Tibial artery (tissue), 4 donors: ENCODE measurements at regions of chr19 and their contacts with region 1.

Region 1: DNA sequence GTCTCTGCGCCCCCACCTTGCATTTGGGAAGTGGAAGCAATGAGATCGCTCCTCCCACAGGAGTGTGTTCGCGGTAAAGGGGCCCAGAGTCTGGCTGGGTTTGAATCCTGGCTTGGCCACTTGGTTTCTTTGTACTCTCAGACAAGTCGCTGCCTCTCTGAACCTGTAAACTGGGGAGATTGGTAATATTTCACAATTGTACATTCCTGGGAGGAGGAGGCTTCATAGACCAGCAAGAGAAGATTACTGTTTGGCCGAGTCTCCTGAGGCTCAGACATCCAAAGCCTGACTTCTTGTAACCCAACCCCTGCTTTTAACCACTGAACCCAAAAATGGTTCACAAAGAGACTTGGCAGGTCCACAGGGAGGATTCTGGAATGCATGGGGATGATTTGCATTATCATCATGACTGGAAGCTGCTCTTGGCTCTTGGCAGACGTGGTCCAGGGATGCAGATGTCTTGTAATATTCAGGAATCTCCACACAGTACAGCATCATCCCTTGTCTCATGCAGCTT is 13.6 kb upstream of the STRN4 start:
- DNase-seq: peak in 1 of 2 donors; percentile 54
- H3K4me3 ChIP-seq: no peak overlapping the region
- H3K27ac ChIP-seq: peak overlapping the region in 1 of 2 donors; percentile 53
- H3K4me1 ChIP-seq: peaks cover 0 to 49% (median 23%) of the 10 kb centered on the region in 4 donors
- H3K27me3 ChIP-seq: no peaks in the 10 kb centered on the region
- CTCF ChIP-seq: no peak

Region 2: GRCh38 chr19:46788262-46788967 is 28.5 kb after region 1 on chr19 and contains the start of gene SLC1A5:
- intact Hi-C with region 1: no loop called
- DNase-seq: peak; percentile 97 to 99
- H3K4me3 ChIP-seq: peak within 1 kb of the TSS; percentile 92 to 95
- H3K27ac ChIP-seq: peak within 1 kb of the TSS; percentile 88 to 97
- H3K4me1 ChIP-seq: peaks cover 0 to 38% (median 28%) of the 10 kb centered on the region in 4 donors
- H3K27me3 ChIP-seq: no peaks in the 10 kb centered on the region
- CTCF ChIP-seq: no peak

Region 3: GRCh38 chr19:46990991-46991676 is 231.3 kb after region 1 on chr19:
- intact Hi-C with region 1: loop called (anchors 5 kb)
- DNase-seq: peak; percentile 83 to 89
- H3K4me3 ChIP-seq: no peak overlapping the region
- H3K27ac ChIP-seq: peak overlapping the region; percentile 25 to 60
- H3K4me1 ChIP-seq: peaks cover 0 to 16% (median 9%) of the 10 kb centered on the region in 4 donors
- H3K27me3 ChIP-seq: no peaks in the 10 kb centered on the region
- CTCF ChIP-seq: peak; percentile 79 to 86